Esophagus squamous epithelium (tissue), 5 donors: ENCODE measurements at regions of chr5 and their contacts with region 1.

Region 1: GRCh38 chr5:54480296-54480695 is 24.8 kb downstream of the HSPB3 start:
- DNase-seq: no peak
- H3K4me3 ChIP-seq: no peak overlapping the region
- H3K27ac ChIP-seq: no peak overlapping the region
- H3K4me1 ChIP-seq: no peaks in the 10 kb centered on the region
- H3K27me3 ChIP-seq: no peaks in the 10 kb centered on the region
- CTCF ChIP-seq: no peak
- POLR2A ChIP-seq: no peak

Region 2: DNA sequence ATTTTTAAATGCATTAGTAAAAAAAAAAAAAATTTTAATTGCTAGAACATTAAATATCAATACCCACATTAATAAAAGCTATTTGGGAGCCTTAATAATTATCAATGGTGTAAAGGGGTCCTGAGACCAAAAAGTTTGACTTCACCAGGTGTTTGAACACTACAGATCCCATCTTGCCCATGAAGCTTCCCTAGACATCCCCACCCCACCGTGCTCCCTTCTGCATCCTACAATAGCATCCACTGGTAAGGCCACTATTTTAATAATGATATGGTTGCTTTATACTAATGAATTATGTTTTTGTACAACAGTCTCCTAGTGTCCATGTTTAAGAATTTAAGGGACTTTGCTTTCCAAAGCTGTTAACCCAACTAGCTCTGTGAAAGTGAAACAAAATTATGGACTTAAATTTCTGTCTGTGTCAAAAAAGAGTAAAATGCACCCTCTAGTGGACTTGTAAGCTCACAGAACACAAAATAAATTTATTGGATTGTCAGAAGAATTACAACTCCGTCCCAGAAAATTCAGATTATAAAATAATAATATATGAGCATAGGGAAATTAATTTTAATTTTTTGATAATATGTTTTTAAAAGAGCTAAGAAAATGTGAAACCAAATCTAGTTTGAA is 245.9 kb before region 1 on chr5:
- intact Hi-C with region 1: loop called (anchors 10 kb)
- DNase-seq: no peak
- H3K4me3 ChIP-seq: no peak overlapping the region
- H3K27ac ChIP-seq: no peak overlapping the region
- H3K4me1 ChIP-seq: peaks cover 0 to 10% (median 0%) of the 10 kb centered on the region in 3 donors
- H3K27me3 ChIP-seq: no peaks in the 10 kb centered on the region
- CTCF ChIP-seq: peak in 5 of 6 experiments; percentile 12 to 59 (median 43)
- POLR2A ChIP-seq: no peak